Dorsolateral prefrontal cortex (tissue), 120 donors: ENCODE measurements at regions of chr19 and their contacts with region 1.

Region 1: GRCh38 chr19:48102870-48103751 is 7.5 kb downstream of the PLA2G4C start:
- DNase-seq: peak in 1 of 10 donors; percentile 34
- H3K4me3 ChIP-seq: no peak overlapping the region
- H3K27ac ChIP-seq: no peak overlapping the region
- H3K27me3 ChIP-seq: no peaks in the 10 kb centered on the region
- CTCF ChIP-seq: peak; percentile 24 to 77 (median 60)

Region 2: GRCh38 chr19:48255376-48256303 is 152.5 kb after region 1 on chr19 and contains the start of gene CARD8:
- intact Hi-C with region 1: loop called (anchors 5 to 10 kb)
- DNase-seq: peak; percentile 65 to 87 (median 78)
- H3K4me3 ChIP-seq: peak within 1 kb of the TSS; percentile 46 to 90 (median 70)
- H3K27ac ChIP-seq: peak within 1 kb of the TSS; percentile 16 to 97 (median 88)
- H3K27me3 ChIP-seq: no peaks in the 10 kb centered on the region
- CTCF ChIP-seq: peak in 40 of 56 donors; percentile 11 to 64 (median 34)
- total RNA-seq, gene CARD8: 10.8 to 45.2 (median 24.0) TPM